Ascending aorta (tissue), 2 donors: ENCODE measurements at regions of chr10 and their contacts with region 1.

Region 1: GRCh38 chr10:43905512-43906236 is 257.0 kb upstream of the ZNF32 start:
- DNase-seq: no peak
- H3K4me3 ChIP-seq: peak overlapping the region in 1 of 2 donors; percentile 19
- H3K27ac ChIP-seq: peak overlapping the region; percentile 40 to 65
- H3K4me1 ChIP-seq: peaks cover 5 to 30% of the 10 kb centered on the region in 2 donors
- H3K27me3 ChIP-seq: no peaks in the 10 kb centered on the region
- CTCF ChIP-seq: no peak

Region 2: GRCh38 chr10:44065788-44066526 is 160.3 kb after region 1 on chr10:
- intact Hi-C with region 1: loop called (anchors 1 kb)
- DNase-seq: no peak
- H3K4me3 ChIP-seq: no peak overlapping the region
- H3K27ac ChIP-seq: peak overlapping the region; percentile 62 to 63
- H3K4me1 ChIP-seq: peaks cover 10 to 25% of the 10 kb centered on the region in 2 donors
- H3K27me3 ChIP-seq: no peaks in the 10 kb centered on the region
- CTCF ChIP-seq: no peak